ENCODE measurements at regions of chr2 and their contacts with region 1.

Region 1: DNA sequence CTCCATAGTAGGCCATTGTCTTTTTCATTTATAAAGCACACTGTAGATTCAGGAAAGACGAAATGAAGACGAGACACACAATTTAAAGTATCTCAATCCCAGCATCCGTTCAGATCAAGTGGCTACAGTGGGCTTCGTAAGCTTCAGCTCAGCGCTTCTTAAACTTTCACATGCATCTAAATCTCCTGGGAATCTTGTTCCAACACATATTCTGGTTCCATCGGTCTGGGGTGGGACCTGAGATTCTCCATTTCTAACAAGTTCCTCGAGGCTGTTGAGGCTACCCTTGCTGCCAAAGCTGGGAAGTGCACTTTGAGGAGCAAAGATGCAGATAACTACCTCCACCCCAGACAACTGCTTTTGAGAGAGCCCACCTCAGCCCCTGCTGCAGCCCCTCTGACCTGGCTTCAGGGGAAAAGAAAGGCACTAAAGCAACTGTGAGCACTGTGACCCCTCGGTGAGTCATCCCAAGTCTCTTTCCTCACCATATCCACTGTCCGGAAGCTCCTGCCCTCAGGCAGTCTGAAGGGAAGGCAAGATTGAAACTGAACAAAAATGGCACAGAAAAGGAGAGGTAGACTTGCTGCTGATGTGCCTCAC is 201.1 kb upstream of the FBXO11 start:
- DNase-seq: no peak
- ATAC-seq: no peak
- H3K4me3 ChIP-seq: no peak overlapping the region
- H3K27ac ChIP-seq: peak overlapping the region in 2 of 3 donors; percentile 1 to 17
- H3K4me1 ChIP-seq: peaks cover 0 to 9% (median 0%) of the 10 kb centered on the region in 4 donors
- H3K27me3 ChIP-seq: no peaks in the 10 kb centered on the region
- CTCF ChIP-seq: no peak
- POLR2A ChIP-seq: no peak

Region 2: DNA sequence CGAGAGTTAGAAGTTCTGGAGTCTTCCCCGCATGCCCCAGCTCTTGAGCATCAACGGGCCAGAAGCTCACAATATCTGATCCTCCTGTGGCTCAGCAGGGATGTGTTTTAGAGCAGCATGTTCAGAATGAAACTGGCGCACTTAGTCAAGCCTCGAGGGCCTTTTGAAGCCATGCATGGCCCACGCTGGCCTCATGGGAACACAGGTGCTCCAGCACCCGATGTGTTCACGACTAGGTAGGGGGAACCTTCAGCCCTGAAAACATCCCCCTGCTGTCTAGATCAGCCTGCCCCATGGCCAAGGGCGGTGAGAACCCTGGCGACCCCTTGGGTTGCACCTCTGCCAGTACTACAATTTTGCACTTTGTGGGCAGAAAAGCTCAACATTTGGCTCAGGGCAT is 291.7 kb before region 1 on chr2:
- intact Hi-C with region 1: no loop called
- DNase-seq: no peak
- ATAC-seq: no peak
- H3K4me3 ChIP-seq: no peak overlapping the region
- H3K27ac ChIP-seq: no peak overlapping the region
- H3K4me1 ChIP-seq: no peaks in the 10 kb centered on the region
- H3K27me3 ChIP-seq: no peaks in the 10 kb centered on the region
- CTCF ChIP-seq: no peak
- POLR2A ChIP-seq: no peak

Region 3: DNA sequence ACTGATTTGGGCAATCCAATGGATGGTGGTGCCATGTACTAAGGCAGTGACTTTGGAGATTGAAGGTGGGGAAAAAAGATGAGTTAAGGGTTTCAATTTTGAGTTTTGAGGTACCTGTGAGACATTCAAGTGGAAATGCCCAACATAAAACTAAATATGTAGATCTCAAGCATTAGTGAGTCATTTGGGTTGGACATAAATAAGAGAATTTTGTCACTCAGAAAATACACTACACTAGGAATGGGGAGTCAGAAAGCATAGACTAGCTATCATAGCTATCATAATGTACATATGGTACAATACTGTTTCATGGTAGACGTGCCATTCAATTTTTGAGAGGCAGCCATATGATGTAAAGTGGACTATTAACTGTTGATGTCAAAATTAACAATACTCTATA is 257.2 kb before region 1 on chr2:
- intact Hi-C with region 1: loop called in 1 of 2 experiments (anchors 10 kb)
- DNase-seq: no peak
- ATAC-seq: no peak
- H3K4me3 ChIP-seq: no peak overlapping the region
- H3K27ac ChIP-seq: no peak overlapping the region
- H3K4me1 ChIP-seq: peaks cover 0 to 6% (median 2%) of the 10 kb centered on the region in 4 donors
- H3K27me3 ChIP-seq: no peaks in the 10 kb centered on the region
- CTCF ChIP-seq: no peak
- POLR2A ChIP-seq: no peak